Left cardiac atrium (tissue), 4 donors: ENCODE measurements at regions of chrX and their contacts with region 1.

Region 1: DNA sequence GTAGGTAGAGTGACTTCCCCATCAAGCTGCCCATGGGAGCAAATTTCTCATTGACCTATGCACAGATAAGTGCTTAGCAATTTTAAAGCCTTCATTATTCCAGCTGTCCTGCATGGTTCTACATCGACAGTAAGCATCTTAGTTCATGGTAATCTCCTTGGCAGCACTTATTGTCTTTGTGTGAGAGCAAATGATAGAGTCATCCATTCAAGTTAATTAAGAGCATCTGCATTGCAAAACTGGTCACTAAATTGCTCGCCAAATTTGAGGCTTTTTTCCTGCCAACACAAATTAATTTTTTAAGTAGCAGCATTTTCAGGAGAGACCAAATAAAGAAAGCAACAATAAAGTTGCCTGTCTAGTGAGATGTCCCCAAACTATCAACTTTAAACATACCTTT is 76.7 kb downstream of the SH3BGRL start:
- DNase-seq: no peak
- ATAC-seq: no peak

Region 2: GRCh38 chrX:81336455-81337152 is 58.0 kb after region 1 on chrX:
- intact Hi-C with region 1: loop called in 1 of 2 experiments (anchors 10 kb)
- DNase-seq: no peak
- ATAC-seq: no peak